HCT116 (cell line): ENCODE measurements at regions of chr1 and their contacts with region 1.

Region 1: DNA sequence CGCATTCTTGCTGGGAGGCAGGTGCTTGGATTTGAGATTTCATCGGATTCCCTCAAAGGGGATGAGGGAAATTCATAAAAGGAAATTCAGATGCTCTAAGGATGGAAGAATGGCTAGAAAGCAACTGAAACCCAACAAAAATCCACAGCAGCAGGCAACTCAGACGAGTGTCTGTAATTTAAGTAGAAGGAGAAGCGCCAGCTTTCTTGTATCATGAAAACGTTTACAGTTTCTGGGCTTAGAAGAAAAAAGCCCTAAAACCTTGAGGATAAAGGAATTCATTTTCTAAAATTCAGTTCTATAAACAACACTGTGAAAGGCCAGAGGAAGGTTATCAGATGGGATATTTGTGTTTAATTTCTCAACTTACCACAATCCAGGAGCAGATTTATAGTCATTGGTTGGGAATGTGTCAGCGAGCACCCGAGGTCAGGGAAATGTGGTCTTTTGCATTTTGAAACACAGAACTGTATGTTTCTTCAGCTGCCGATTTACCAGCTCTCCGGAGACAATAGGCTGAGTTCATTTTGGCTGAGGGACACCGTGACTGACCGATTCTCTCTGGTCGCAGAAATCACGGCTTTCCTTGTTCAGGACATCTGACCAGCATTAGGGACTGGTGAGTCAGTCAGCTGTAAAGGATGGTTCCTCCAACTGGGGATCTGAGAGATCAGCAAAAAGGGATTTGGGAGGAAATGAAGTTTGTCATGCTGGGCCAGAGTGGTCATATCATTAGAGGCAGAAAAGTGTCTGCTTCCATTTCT is 111.6 kb upstream of the ERRFI1 start:
- DNase-seq: peak; percentile 58
- ATAC-seq: peak; percentile 51
- H3K4me3 ChIP-seq: peak overlapping the region; percentile 10 to 40
- H3K27ac ChIP-seq: peak overlapping the region; percentile 97
- H3K4me1 ChIP-seq: peaks cover 78 to 85% of the 10 kb centered on the region in 2 experiments
- H3K27me3 ChIP-seq: no peaks in the 10 kb centered on the region
- CTCF ChIP-seq: no peak
- POLR2A ChIP-seq: no peak
- RAD21 ChIP-seq: peak; percentile 17; the same call in 1 of the 2 replicates

Region 2: DNA sequence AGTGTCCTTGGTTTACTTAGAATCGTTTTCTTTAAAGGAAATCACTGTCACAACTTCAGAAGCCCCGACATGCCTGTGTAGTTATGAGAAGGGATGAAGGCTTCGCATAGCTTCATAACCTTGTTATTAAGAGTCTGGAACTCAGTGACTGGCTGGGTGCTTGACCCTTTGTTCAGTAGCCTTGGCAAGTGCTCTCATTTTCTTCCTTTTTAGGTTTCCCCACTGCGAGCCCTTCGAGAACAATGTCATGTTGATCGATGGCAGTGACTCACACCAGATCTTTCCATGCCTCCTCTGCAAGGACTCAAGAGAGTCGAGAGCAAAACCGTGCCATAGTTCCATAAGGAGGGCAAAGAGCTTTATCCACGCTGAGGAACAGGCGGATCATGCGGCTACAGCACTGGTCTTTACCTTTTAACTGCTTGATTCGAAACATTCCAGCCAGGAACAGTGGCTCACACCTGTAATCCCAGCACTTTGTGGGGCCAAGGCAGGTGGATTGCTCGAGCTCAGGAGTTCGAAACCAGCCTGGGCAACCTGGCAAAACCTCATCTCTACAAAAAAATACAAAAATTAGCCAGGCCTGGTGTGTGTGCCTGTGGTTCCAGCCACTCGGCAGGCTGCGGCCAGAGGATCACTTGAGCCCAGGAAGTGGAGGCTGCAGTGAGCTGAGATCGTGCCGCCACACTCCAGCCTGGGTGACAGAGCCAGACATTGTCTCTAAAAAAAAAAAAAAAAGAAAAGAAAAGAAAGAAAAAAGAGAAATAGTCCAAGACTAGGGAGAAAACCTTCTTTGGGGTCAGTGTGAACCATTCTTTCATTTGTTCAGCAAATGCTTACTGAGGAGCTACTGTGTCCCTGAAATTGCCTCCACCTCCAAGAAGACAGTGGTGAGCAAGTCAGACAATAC is 16.1 kb before region 1 on chr1:
- CTCF ChIA-PET with region 1: interaction called, 6 read pairs
- POLR2A ChIA-PET with region 1: interaction called, 61 read pairs
- RAD21 ChIA-PET with region 1: no interaction called
- intact Hi-C with region 1: no loop called
- DNase-seq: peak; percentile 95
- ATAC-seq: peak; percentile 65
- H3K4me3 ChIP-seq: peak overlapping the region in 1 of 2 experiments; percentile 15; a peak in 1 of 4 replicates
- H3K27ac ChIP-seq: peak overlapping the region; percentile 99
- H3K4me1 ChIP-seq: peaks cover 72 to 83% of the 10 kb centered on the region in 2 experiments
- H3K27me3 ChIP-seq: no peaks in the 10 kb centered on the region
- CTCF ChIP-seq: no peak
- POLR2A ChIP-seq: no peak
- RAD21 ChIP-seq: no peak

Region 3: DNA sequence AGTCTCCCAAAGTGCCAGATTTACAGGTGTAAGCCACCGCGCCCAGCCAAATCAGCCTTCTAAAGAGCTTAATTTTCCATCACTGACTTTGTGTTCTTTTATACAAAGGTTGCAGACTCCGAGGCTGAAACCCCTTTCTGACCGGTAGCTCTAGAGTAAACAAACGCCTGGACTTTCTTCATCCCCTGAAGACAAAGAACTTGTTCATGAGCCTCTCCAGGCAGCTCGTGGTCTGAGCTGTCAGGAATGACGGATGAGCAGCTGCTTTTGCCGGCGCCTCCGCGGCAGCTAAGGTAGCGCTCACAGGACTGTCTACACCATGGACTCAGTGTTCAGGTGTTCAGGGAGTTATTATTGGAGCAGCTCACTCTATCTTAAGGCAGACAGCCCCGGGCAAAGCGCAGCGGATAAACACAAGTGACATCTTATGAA is 17.0 kb after region 1 on chr1:
- CTCF ChIA-PET with region 1: no interaction called
- POLR2A ChIA-PET with region 1: interaction called, 16 read pairs
- RAD21 ChIA-PET with region 1: interaction called in 1 of 2 experiments, 3 read pairs
- intact Hi-C with region 1: no loop called
- DNase-seq: peak; percentile 85
- ATAC-seq: peak; percentile 84
- H3K4me3 ChIP-seq: peak overlapping the region in 1 of 2 experiments; percentile 33; a peak in 2 of 4 replicates
- H3K27ac ChIP-seq: peak overlapping the region; percentile 85
- H3K4me1 ChIP-seq: peaks cover 37 to 38% of the 10 kb centered on the region in 2 experiments
- H3K27me3 ChIP-seq: no peaks in the 10 kb centered on the region
- CTCF ChIP-seq: no peak
- POLR2A ChIP-seq: no peak
- RAD21 ChIP-seq: peak; percentile 16; the same call in 1 of the 2 replicates